ENCODE measurements at regions of chr2 and their contacts with region 1.

Region 1: DNA sequence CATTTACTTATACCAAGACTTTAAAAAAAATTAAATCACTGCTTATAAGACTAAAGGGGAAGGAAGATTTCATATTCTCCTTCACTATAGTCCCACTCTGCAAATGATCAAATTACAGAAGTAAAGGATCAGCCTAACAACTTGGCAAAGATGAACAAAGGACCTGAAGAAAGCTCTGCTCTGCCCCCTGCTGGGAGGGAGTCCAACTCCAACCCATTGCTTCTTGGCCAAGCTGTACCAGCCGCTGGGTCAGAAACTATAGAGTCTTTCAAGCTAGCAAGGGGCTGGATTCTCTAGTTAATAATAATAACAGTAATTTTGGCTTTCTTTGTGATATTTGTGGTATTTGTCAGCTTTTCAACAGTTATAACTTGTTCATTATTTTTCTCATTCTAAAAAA is 927.0 kb upstream of the CRIM1 start:
- DNase-seq: no peak
- ATAC-seq: no peak
- H3K4me3 Mint-ChIP-seq: no peak overlapping the region
- H3K27ac Mint-ChIP-seq: no peak overlapping the region
- H3K4me1 Mint-ChIP-seq: no peaks in the 10 kb centered on the region
- H3K27me3 Mint-ChIP-seq: no peaks in the 10 kb centered on the region
- CTCF ChIP-seq: no peak

Region 2: GRCh38 chr2:34096562-34097171 is 1331.9 kb before region 1 on chr2:
- CTCF ChIA-PET with region 1: no interaction called
- POLR2A ChIA-PET with region 1: no interaction called
- intact Hi-C with region 1: loop called (anchors 5 kb)
- DNase-seq: no peak
- ATAC-seq: no peak
- H3K4me3 Mint-ChIP-seq: no peak overlapping the region
- H3K27ac Mint-ChIP-seq: no peak overlapping the region
- H3K4me1 Mint-ChIP-seq: no peaks in the 10 kb centered on the region
- H3K27me3 Mint-ChIP-seq: no peaks in the 10 kb centered on the region
- CTCF ChIP-seq: peak; percentile 80